ENCODE measurements at regions of chr9 and their contacts with region 1.

Region 1: DNA sequence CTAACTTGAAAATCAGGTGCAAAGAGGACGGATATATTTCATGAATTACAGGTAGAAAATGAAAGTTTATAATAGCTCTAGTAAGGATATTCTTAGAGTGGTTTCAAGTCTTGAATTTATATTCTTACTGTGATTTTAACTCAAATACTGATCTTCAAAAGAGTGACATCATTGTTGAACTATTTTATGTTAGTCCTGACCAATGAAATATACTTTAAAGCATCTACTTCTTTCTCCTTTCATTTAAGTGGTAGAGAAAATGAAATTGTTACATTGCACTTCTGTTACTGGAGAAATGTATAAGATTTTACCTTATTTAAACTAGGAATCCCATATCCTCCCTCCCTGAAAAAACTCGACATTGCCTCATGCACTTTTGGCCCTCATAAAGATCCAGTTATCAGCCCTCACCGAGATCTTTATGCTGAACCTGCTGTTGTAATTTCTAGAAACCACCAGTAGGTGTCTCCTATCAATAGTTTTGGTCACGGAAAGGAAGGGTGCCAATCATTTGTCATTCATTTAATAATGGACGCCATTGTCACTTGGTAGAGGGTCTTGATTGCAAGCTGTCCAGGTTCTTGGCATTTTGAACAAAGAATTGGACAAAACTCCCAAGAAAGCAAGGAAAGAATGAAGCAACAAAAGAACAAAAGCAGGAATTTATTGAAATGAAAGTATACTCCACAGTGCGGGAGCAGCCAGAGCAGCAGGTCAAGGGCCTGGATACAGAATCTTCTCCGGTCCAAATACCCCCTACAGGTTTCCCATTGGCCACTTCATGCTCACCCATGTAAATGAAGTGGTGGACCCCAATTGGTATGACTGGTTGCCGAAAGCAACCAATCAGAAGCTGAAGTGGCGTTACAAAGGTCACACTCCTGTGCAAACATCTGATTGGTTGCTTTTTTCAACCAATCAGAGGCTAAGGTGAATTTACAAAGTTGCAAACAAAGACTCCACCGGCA is 524.2 kb downstream of the PSAT1 start:
- DNase-seq: peak; percentile 29
- H3K4me3 ChIP-seq: peak overlapping the region; percentile 19 to 30 (median 29)
- H3K27ac ChIP-seq: no peak overlapping the region
- H3K4me1 ChIP-seq: no peaks in the 10 kb centered on the region
- H3K27me3 ChIP-seq: no peaks in the 10 kb centered on the region
- CTCF ChIP-seq: peak; percentile 73 to 74

Region 2: DNA sequence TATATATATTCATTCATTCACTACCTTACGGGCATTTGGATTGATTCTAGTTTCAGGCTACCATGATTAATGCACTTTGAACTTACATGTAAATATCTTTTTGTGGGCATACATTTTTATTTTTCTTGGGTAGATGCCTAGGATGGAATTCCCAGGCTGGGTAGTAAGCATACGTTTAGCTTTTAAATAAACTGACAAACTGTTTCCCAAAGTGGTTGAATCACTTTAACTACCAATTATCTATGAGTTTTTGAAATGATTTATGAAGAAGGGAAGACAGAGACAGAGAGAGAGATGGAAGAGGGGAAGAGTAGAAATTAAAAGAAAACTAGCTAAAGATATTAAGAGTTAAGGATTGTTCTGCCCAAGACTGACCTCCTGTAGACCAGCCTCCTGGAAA is 88.4 kb after region 1 on chr9:
- CTCF ChIA-PET with region 1: no interaction called
- dilution Hi-C with region 1: no loop called
- in situ Hi-C with region 1: no loop called
- intact Hi-C with region 1: no loop called
- DNase-seq: peak; percentile 39
- H3K4me3 ChIP-seq: no peak overlapping the region
- H3K27ac ChIP-seq: no peak overlapping the region
- H3K4me1 ChIP-seq: peaks cover 6% of the 10 kb centered on the region
- H3K27me3 ChIP-seq: no peaks in the 10 kb centered on the region
- CTCF ChIP-seq: no peak

Region 3: GRCh38 chr9:78921341-78921740 is 100.2 kb after region 1 on chr9:
- CTCF ChIA-PET with region 1: no interaction called
- dilution Hi-C with region 1: no loop called
- in situ Hi-C with region 1: no loop called
- intact Hi-C with region 1: no loop called
- DNase-seq: no peak
- H3K4me3 ChIP-seq: no peak overlapping the region
- H3K27ac ChIP-seq: no peak overlapping the region
- H3K4me1 ChIP-seq: peaks cover 15% of the 10 kb centered on the region
- H3K27me3 ChIP-seq: no peaks in the 10 kb centered on the region
- CTCF ChIP-seq: no peak

Region 4: DNA sequence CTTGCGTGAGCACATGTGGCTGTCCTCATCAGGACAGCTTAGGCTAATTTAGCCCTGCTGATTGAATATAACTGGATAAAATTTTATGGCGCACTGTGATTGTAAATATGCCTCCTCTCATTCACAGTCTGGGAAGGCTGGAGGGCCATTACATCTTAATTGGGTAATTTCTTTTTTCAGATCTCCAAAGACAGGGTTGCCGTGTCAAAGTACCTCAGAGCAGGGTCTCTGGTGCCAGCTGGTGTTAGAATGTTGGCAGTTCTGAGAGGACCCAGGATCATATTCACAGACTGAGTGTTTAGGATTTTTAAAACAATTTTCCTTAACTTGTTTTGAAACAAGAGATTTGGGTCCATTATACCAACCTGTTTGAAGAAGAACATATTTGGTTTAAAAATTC is 294.9 kb after region 1 on chr9:
- CTCF ChIA-PET with region 1: no interaction called
- dilution Hi-C with region 1: no loop called
- in situ Hi-C with region 1: no loop called
- intact Hi-C with region 1: loop called (anchors 5 kb)
- DNase-seq: no peak
- H3K4me3 ChIP-seq: no peak overlapping the region
- H3K27ac ChIP-seq: no peak overlapping the region
- H3K4me1 ChIP-seq: no peaks in the 10 kb centered on the region
- H3K27me3 ChIP-seq: no peaks in the 10 kb centered on the region
- CTCF ChIP-seq: peak in 1 of 2 donors; percentile 21

Region 5: GRCh38 chr9:79166000-79166399 is 344.9 kb after region 1 on chr9:
- CTCF ChIA-PET with region 1: no interaction called
- dilution Hi-C with region 1: no loop called
- in situ Hi-C with region 1: no loop called
- intact Hi-C with region 1: no loop called
- DNase-seq: peak; percentile 23
- H3K4me3 ChIP-seq: no peak overlapping the region
- H3K27ac ChIP-seq: no peak overlapping the region
- H3K4me1 ChIP-seq: peaks cover 12% of the 10 kb centered on the region
- H3K27me3 ChIP-seq: peaks cover 1% of the 10 kb centered on the region
- CTCF ChIP-seq: no peak